Transverse colon (tissue), 4 donors: ENCODE measurements at regions of chr3 and their contacts with region 1.

Region 1: GRCh38 chr3:139346771-139347170 is 3.0 kb downstream of the MRPS22 start:
- DNase-seq: no peak
- H3K4me3 ChIP-seq: no peak overlapping the region
- H3K27ac ChIP-seq: no peak overlapping the region
- H3K4me1 ChIP-seq: peaks cover 8 to 16% (median 12%) of the 10 kb centered on the region in 4 donors
- H3K27me3 ChIP-seq: no peaks in the 10 kb centered on the region
- CTCF ChIP-seq: no peak
- EP300 ChIP-seq: no peak
- POLR2A ChIP-seq: no peak

Region 2: DNA sequence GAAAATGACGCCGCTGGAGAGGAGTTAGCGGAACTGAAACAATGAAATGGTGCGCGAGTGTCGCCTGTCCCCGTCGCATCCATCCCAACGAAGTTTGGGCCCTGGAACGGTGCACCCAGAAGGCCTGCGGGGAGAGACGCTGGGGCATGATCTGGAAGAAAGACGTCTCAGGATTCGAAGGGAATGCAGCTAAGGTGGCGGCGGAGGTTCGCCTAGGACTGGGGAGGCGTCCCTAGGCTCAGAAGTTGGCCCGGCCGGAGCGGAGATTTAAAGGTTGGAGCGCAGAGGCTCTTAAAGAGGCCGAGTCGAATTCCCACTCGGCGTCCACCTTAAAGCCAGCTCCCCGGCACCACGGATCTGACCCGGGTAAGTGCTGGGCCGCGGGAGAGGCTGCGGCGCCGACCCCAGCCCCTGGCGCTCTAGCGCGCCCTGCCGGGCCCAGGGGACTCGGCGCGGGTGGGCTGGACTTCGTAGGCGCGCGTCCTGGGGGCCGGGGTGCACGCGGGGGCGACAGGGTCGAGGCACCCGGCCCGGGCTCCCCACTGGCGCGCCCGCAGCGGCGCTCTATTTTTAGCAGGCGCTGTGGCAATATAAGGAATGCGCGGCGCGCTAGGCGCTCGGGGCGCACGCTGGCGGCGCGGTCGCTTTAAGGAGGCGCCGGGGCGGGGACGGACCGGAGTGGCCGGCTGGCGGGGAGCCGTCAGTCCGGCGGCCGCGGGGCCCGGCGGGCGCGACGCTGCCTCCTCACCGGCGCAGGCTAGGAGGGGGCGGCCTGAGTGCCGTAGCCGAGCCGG is 998.6 kb before region 1 on chr3 and contains the start of gene MRAS:
- in situ Hi-C with region 1: no loop called
- intact Hi-C with region 1: loop called (anchors 5 kb)
- DNase-seq: peak; percentile 67
- H3K4me3 ChIP-seq: peak within 1 kb of the TSS; percentile 59 to 78 (median 68)
- H3K27ac ChIP-seq: peak within 1 kb of the TSS; percentile 83 to 91 (median 86)
- H3K4me1 ChIP-seq: peaks cover 0 to 22% (median 5%) of the 10 kb centered on the region in 4 donors
- H3K27me3 ChIP-seq: peaks cover 9% of the 10 kb centered on the region
- CTCF ChIP-seq: peak in 2 of 5 experiments; percentile 17 to 31
- EP300 ChIP-seq: no peak
- POLR2A ChIP-seq: no peak
- total RNA-seq, gene MRAS: 3.0 to 9.6 (median 6.3) TPM

Region 3: GRCh38 chr3:139588450-139588849 is 241.7 kb after region 1 on chr3:
- in situ Hi-C with region 1: no loop called
- intact Hi-C with region 1: no loop called
- DNase-seq: no peak
- H3K4me3 ChIP-seq: no peak overlapping the region
- H3K27ac ChIP-seq: no peak overlapping the region
- H3K4me1 ChIP-seq: no peaks in the 10 kb centered on the region
- H3K27me3 ChIP-seq: no peaks in the 10 kb centered on the region
- CTCF ChIP-seq: no peak
- EP300 ChIP-seq: no peak
- POLR2A ChIP-seq: no peak

Region 4: DNA sequence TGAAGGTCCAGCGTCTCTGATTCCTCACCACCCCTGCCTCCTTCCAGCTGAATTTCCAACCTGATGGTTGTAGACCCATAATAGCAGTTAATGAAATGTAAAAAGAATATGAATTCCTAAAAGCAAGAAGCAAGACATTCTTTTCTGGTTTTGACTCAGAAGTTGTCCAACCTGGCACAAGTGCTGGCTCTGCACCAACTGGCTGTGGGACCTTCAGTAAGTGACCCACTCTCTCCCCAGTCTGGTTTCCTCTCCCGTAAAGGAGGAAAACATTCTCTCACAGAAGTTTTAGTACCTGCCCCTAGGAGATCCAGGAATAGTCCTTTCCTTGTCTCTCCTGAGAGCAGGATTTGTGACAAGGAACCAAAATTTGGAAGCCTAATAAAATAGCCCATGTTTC is 1094.2 kb after region 1 on chr3:
- in situ Hi-C with region 1: no loop called
- intact Hi-C with region 1: no loop called
- DNase-seq: no peak
- H3K4me3 ChIP-seq: no peak overlapping the region
- H3K27ac ChIP-seq: no peak overlapping the region
- H3K4me1 ChIP-seq: no peaks in the 10 kb centered on the region
- H3K27me3 ChIP-seq: no peaks in the 10 kb centered on the region
- CTCF ChIP-seq: no peak
- EP300 ChIP-seq: no peak
- POLR2A ChIP-seq: no peak